ENCODE measurements at regions of chr17 and their contacts with region 1.

Region 1: GRCh38 chr17:40113110-40113906 is 8.5 kb upstream of the MSL1 start:
- DNase-seq: peak; percentile 81 to 96 (median 91)
- ATAC-seq: peak; percentile 77 to 86 (median 79)
- H3K4me3 ChIP-seq: peak overlapping the region; percentile 41 to 43
- H3K4me3 Mint-ChIP-seq: peak overlapping the region; percentile 66 to 82 (median 82)
- H3K27ac ChIP-seq: peak overlapping the region; percentile 66
- H3K27ac Mint-ChIP-seq: peak overlapping the region; percentile 93 to 94
- H3K4me1 ChIP-seq: peaks cover 46 to 57% of the 10 kb centered on the region in 2 experiments
- H3K4me1 Mint-ChIP-seq: peaks cover 55 to 57% (median 57%) of the 10 kb centered on the region in 3 donors
- H3K27me3 ChIP-seq: no peaks in the 10 kb centered on the region
- H3K27me3 Mint-ChIP-seq: no peaks in the 10 kb centered on the region

Region 2: DNA sequence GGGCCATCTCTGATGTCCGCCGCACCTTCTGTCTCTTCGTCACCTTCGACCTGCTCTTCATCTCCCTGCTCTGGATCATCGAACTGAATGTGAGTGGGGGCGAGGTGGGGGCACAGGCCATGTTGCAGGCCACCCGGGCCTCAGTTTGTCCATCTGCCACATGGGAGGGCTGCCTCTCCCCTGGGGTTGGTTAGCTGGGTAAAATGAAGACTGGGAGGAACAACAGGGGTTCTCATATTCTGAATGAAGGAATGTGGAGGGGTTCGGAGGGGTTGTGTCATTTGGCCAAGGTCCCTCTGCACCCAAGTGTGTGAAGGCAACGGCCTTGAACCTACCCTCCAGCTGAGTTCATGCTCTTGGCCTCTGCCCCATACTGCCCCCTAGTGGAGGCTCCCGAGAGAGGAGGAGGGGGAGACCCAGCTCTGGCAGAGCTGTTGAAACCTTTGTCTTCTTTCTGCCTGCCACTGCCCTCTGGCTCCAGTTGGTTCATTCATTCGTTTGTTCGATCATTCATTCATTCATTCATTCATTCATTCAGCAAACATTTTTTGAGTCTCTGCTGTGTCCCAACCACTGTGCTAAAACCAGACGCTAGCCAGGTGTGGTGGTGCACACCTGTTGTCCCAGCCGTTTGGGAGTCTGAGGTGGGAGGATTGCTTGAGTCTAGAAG is 459.5 kb before region 1 on chr17:
- CTCF ChIA-PET with region 1: no interaction called
- POLR2A ChIA-PET with region 1: no interaction called
- DNase-seq: peak; percentile 40 to 85 (median 75)
- ATAC-seq: peak; percentile 61 to 74 (median 66)
- H3K4me3 ChIP-seq: no peak overlapping the region
- H3K4me3 Mint-ChIP-seq: no peak overlapping the region
- H3K27ac ChIP-seq: no peak overlapping the region
- H3K27ac Mint-ChIP-seq: peak overlapping the region in 1 of 2 donors; percentile 34
- H3K4me1 ChIP-seq: peaks cover 5 to 45% of the 10 kb centered on the region in 2 experiments
- H3K4me1 Mint-ChIP-seq: peaks cover 53 to 67% (median 61%) of the 10 kb centered on the region in 3 donors
- H3K27me3 ChIP-seq: no peaks in the 10 kb centered on the region
- H3K27me3 Mint-ChIP-seq: no peaks in the 10 kb centered on the region

Region 3: GRCh38 chr17:39988206-39988810 is 125.0 kb before region 1 on chr17:
- CTCF ChIA-PET with region 1: no interaction called
- POLR2A ChIA-PET with region 1: no interaction called
- DNase-seq: no peak
- ATAC-seq: no peak
- H3K4me3 ChIP-seq: no peak overlapping the region
- H3K4me3 Mint-ChIP-seq: no peak overlapping the region
- H3K27ac ChIP-seq: no peak overlapping the region
- H3K27ac Mint-ChIP-seq: no peak overlapping the region
- H3K4me1 ChIP-seq: no peaks in the 10 kb centered on the region
- H3K4me1 Mint-ChIP-seq: peaks cover 14 to 20% (median 19%) of the 10 kb centered on the region in 3 donors
- H3K27me3 ChIP-seq: no peaks in the 10 kb centered on the region
- H3K27me3 Mint-ChIP-seq: no peaks in the 10 kb centered on the region

Region 4: GRCh38 chr17:40075201-40075941 is 37.9 kb before region 1 on chr17:
- CTCF ChIA-PET with region 1: interaction called, 16 to 30 read pairs
- POLR2A ChIA-PET with region 1: no interaction called
- DNase-seq: peak in 31 of 35 experiments; percentile 32 to 82 (median 61)
- ATAC-seq: peak; percentile 72 to 85 (median 80)
- H3K4me3 ChIP-seq: no peak overlapping the region
- H3K4me3 Mint-ChIP-seq: peak overlapping the region in 2 of 3 donors; percentile 36 to 47
- H3K27ac ChIP-seq: no peak overlapping the region
- H3K27ac Mint-ChIP-seq: peak overlapping the region; percentile 71 to 74
- H3K4me1 ChIP-seq: peaks cover 18 to 46% of the 10 kb centered on the region in 2 experiments
- H3K4me1 Mint-ChIP-seq: peaks cover 36 to 54% (median 48%) of the 10 kb centered on the region in 3 donors
- H3K27me3 ChIP-seq: no peaks in the 10 kb centered on the region
- H3K27me3 Mint-ChIP-seq: no peaks in the 10 kb centered on the region

Region 5: GRCh38 chr17:40098846-40099618 is 14.3 kb before region 1 on chr17:
- CTCF ChIA-PET with region 1: interaction called, 3 to 75 read pairs
- POLR2A ChIA-PET with region 1: interaction called, 3 to 15 read pairs
- DNase-seq: peak; percentile 96 to 100 (median 98)
- ATAC-seq: peak; percentile 65 to 72 (median 69)
- H3K4me3 ChIP-seq: peak overlapping the region; percentile 84 to 85
- H3K4me3 Mint-ChIP-seq: peak overlapping the region; percentile 93 to 98 (median 98)
- H3K27ac ChIP-seq: peak overlapping the region; percentile 93
- H3K27ac Mint-ChIP-seq: peak overlapping the region; percentile 93 to 99
- H3K4me1 ChIP-seq: peaks cover 61 to 99% of the 10 kb centered on the region in 2 experiments
- H3K4me1 Mint-ChIP-seq: peaks cover 88 to 94% (median 94%) of the 10 kb centered on the region in 3 donors
- H3K27me3 ChIP-seq: no peaks in the 10 kb centered on the region
- H3K27me3 Mint-ChIP-seq: no peaks in the 10 kb centered on the region

Region 6: DNA sequence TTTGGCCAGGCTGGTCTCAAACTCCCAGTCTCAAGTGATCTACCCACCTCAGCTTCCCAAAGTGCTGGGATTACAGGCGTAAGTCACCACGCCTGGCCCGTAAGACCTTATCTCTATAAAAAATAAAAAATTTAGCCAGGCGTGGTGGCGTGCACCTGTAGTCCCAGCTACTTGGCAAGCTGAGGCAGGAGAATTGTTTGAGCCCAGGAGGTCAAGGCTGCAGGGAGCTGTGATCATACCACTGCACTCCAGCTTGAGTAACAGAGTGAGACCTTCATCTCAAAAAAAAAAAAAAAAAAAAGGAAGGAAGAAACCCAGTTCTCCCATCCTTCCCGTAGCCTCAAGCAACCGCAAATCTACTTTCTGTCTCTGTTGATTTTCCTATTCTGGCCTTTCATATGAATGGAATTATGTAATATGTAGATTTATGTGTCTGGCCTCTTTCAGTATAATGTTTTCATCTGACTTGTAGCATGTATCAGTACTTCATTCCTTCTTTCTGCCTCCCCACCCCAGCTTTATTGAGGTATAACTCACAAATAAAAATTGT is 38.2 kb after region 1 on chr17:
- CTCF ChIA-PET with region 1: interaction called in 1 of 2 experiments, 11 read pairs
- POLR2A ChIA-PET with region 1: interaction called in 1 of 2 experiments, 3 read pairs
- DNase-seq: no peak
- ATAC-seq: no peak
- H3K4me3 ChIP-seq: no peak overlapping the region
- H3K4me3 Mint-ChIP-seq: no peak overlapping the region
- H3K27ac ChIP-seq: no peak overlapping the region
- H3K27ac Mint-ChIP-seq: peak overlapping the region; percentile 22 to 24
- H3K4me1 ChIP-seq: peaks cover 0 to 12% of the 10 kb centered on the region in 2 experiments
- H3K4me1 Mint-ChIP-seq: peaks cover 62 to 70% (median 63%) of the 10 kb centered on the region in 3 donors
- H3K27me3 ChIP-seq: no peaks in the 10 kb centered on the region
- H3K27me3 Mint-ChIP-seq: no peaks in the 10 kb centered on the region

Region 7: GRCh38 chr17:40191237-40192208 is 78.2 kb after region 1 on chr17:
- CTCF ChIA-PET with region 1: interaction called in 1 of 2 experiments, 19 read pairs
- POLR2A ChIA-PET with region 1: interaction called in 1 of 2 experiments, 3 read pairs
- DNase-seq: peak in 34 of 35 experiments; percentile 22 to 77 (median 48)
- ATAC-seq: peak; percentile 85 to 91 (median 88)
- H3K4me3 ChIP-seq: peak overlapping the region; percentile 51 to 64
- H3K4me3 Mint-ChIP-seq: peak overlapping the region; percentile 86 to 95 (median 92)
- H3K27ac ChIP-seq: no peak overlapping the region
- H3K27ac Mint-ChIP-seq: peak overlapping the region in 1 of 2 donors; percentile 49
- H3K4me1 ChIP-seq: peaks cover 0 to 15% of the 10 kb centered on the region in 2 experiments
- H3K4me1 Mint-ChIP-seq: peaks cover 4 to 18% (median 9%) of the 10 kb centered on the region in 3 donors
- H3K27me3 ChIP-seq: peaks cover 0 to 15% of the 10 kb centered on the region in 2 experiments
- H3K27me3 Mint-ChIP-seq: no peaks in the 10 kb centered on the region